ENCODE measurements at regions of chr16 and their contacts with region 1.

Region 1: GRCh38 chr16:50210266-50211038 is 55.9 kb upstream of the ADCY7 start:
- DNase-seq: peak; percentile 80
- ATAC-seq: peak; percentile 95
- H3K4me3 Mint-ChIP-seq: no peak overlapping the region
- H3K27ac Mint-ChIP-seq: peak overlapping the region; percentile 41
- H3K4me1 Mint-ChIP-seq: peaks cover 32% of the 10 kb centered on the region
- H3K27me3 Mint-ChIP-seq: no peaks in the 10 kb centered on the region

Region 2: DNA sequence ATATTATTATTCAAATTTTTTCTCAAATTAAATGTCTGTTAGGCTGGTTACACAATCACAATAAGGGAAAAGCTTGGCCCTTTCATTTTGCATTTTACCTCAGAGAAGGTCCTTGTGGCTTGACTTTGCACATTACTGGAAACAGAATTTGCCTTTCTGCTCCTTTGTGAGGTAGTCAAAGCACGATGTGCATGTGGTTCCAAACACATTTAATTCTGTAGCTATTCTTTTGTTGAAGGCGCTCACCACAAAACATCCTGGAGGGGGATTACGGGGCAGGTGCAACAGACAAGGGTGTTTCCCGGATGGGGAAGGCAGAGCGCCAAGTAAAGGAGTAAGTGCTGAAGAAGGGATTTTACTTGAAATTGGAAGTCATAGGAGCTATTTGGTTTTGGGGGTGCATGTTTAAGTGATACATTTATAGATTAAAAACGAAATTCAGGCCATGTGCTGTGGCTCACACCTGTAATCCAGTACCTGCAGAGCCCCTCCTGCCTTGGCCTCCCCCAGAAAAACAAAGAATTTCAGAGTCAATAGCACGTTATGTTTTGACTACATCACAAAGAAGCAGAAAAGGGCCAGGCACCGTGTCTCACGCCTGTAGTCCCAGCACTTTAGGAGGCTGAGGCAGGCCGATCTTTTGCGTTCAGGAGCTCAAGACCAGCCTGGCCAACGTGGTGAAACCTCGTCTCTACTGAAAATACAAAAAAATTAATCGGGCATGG is 88.6 kb before region 1 on chr16:
- CTCF ChIA-PET with region 1: interaction called, 26 read pairs
- POLR2A ChIA-PET with region 1: no interaction called
- DNase-seq: peak; percentile 51
- ATAC-seq: peak; percentile 61
- H3K4me3 Mint-ChIP-seq: peak overlapping the region; percentile 32
- H3K27ac Mint-ChIP-seq: peak overlapping the region; percentile 31
- H3K4me1 Mint-ChIP-seq: peaks cover 29% of the 10 kb centered on the region
- H3K27me3 Mint-ChIP-seq: no peaks in the 10 kb centered on the region

Region 3: GRCh38 chr16:50160495-50161164 is 49.8 kb before region 1 on chr16:
- CTCF ChIA-PET with region 1: interaction called, 31 read pairs
- POLR2A ChIA-PET with region 1: no interaction called
- DNase-seq: no peak
- ATAC-seq: peak; percentile 45
- H3K4me3 Mint-ChIP-seq: no peak overlapping the region
- H3K27ac Mint-ChIP-seq: no peak overlapping the region
- H3K4me1 Mint-ChIP-seq: peaks cover 44% of the 10 kb centered on the region
- H3K27me3 Mint-ChIP-seq: no peaks in the 10 kb centered on the region

Region 4: GRCh38 chr16:50193594-50193993 is 16.9 kb before region 1 on chr16:
- CTCF ChIA-PET with region 1: interaction called, 44 read pairs
- POLR2A ChIA-PET with region 1: no interaction called
- DNase-seq: no peak
- ATAC-seq: no peak
- H3K4me3 Mint-ChIP-seq: no peak overlapping the region
- H3K27ac Mint-ChIP-seq: no peak overlapping the region
- H3K4me1 Mint-ChIP-seq: peaks cover 47% of the 10 kb centered on the region
- H3K27me3 Mint-ChIP-seq: no peaks in the 10 kb centered on the region

Region 5: DNA sequence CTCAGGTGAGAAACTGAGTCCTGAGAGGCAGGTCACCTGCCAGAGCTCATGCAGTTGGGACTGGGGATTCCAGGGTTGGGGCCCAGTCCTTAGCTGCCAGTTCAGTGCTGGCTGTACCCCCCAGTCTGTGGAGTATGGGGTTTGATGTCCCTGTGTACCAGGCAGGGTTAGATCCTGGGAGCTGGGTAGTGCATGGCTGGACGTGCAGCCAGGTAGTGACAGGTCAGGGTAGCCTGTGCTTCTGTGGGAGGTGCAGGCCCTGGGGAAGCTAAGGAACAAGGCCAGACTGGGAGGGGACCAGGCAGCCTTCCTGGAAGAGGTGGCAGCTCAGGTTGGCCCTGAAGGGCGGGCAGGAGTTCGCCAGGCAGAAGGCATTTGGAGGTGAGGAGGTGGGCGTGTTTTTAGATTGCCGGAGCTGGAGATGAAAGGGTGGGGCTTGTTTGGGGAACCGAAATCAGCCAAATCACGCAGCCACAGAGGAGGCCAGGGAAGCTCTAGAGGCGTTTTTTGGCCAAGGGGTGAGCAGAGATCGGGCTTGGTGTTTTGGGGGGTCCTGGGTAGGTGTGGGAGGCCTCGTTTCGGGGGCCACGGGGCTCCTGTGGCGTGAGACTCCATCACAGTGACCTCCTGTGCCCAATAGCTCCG is 63.4 kb after region 1 on chr16:
- CTCF ChIA-PET with region 1: interaction called, 13 read pairs
- POLR2A ChIA-PET with region 1: no interaction called
- DNase-seq: peak; percentile 68
- ATAC-seq: peak; percentile 46
- H3K4me3 Mint-ChIP-seq: peak overlapping the region; percentile 79
- H3K27ac Mint-ChIP-seq: peak overlapping the region; percentile 98
- H3K4me1 Mint-ChIP-seq: peaks cover 98% of the 10 kb centered on the region
- H3K27me3 Mint-ChIP-seq: no peaks in the 10 kb centered on the region

Region 6: DNA sequence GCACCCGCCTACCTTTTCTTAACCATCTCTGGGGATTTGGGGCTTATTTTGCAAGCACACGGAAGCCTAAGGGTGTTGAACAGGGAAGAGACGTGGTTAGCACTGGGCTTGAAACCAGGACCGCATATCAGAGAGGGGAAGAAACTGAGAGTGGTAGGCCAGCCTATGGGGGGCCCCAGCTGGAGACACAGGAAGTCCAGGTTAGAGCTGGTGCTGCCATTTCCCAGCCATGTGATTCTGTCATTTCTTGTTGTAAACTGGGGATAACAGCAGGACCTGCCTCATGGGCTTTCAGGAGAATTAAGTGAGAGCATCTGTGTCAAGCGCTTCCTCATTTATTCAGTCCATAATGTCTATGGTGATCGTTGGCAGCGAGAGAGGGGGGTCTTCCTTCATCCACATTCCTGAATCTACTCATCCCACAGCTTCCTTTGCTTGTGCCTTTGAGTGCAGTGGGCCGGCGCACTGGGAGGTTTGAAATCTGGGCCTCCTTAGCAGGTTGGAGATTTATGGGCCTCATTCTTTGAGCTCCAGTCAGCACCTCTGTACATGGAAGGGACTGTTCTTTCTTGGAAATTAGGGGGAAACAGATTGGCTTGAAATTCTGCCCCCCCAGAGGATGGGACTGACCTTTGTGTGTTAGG is 357.9 kb after region 1 on chr16:
- CTCF ChIA-PET with region 1: no interaction called
- POLR2A ChIA-PET with region 1: no interaction called
- DNase-seq: no peak
- ATAC-seq: no peak
- H3K4me3 Mint-ChIP-seq: no peak overlapping the region
- H3K27ac Mint-ChIP-seq: no peak overlapping the region
- H3K4me1 Mint-ChIP-seq: peaks cover 13% of the 10 kb centered on the region
- H3K27me3 Mint-ChIP-seq: peaks cover 2% of the 10 kb centered on the region